Esophagus muscularis mucosa (tissue), 4 donors: ENCODE measurements at regions of chr15 and their contacts with region 1.

Region 1: GRCh38 chr15:91055548-91056331 is 33.3 kb upstream of the VPS33B start:
- DNase-seq: no peak
- H3K4me3 ChIP-seq: no peak overlapping the region
- H3K27ac ChIP-seq: no peak overlapping the region
- H3K4me1 ChIP-seq: peaks cover 0 to 6% (median 3%) of the 10 kb centered on the region in 4 donors
- H3K27me3 ChIP-seq: peaks cover 0 to 60% (median 0%) of the 10 kb centered on the region in 4 donors
- CTCF ChIP-seq: peak; percentile 66 to 84 (median 81)
- EP300 ChIP-seq: no peak
- POLR2A ChIP-seq: no peak

Region 2: GRCh38 chr15:89985111-89985510 is 1070.6 kb before region 1 on chr15:
- intact Hi-C with region 1: no loop called
- DNase-seq: no peak
- H3K4me3 ChIP-seq: no peak overlapping the region
- H3K27ac ChIP-seq: no peak overlapping the region
- H3K4me1 ChIP-seq: no peaks in the 10 kb centered on the region
- H3K27me3 ChIP-seq: peaks cover 0 to 14% (median 0%) of the 10 kb centered on the region in 4 donors
- CTCF ChIP-seq: no peak
- EP300 ChIP-seq: no peak
- POLR2A ChIP-seq: no peak

Region 3: GRCh38 chr15:91224755-91225380 is 169.1 kb after region 1 on chr15:
- intact Hi-C with region 1: loop called (anchors 5 kb)
- DNase-seq: no peak
- H3K4me3 ChIP-seq: no peak overlapping the region
- H3K27ac ChIP-seq: no peak overlapping the region
- H3K4me1 ChIP-seq: peaks cover 0 to 5% (median 1%) of the 10 kb centered on the region in 4 donors
- H3K27me3 ChIP-seq: peaks cover 0 to 22% (median 0%) of the 10 kb centered on the region in 4 donors
- CTCF ChIP-seq: peak; percentile 34 to 61 (median 52)
- EP300 ChIP-seq: no peak
- POLR2A ChIP-seq: no peak

Region 4: DNA sequence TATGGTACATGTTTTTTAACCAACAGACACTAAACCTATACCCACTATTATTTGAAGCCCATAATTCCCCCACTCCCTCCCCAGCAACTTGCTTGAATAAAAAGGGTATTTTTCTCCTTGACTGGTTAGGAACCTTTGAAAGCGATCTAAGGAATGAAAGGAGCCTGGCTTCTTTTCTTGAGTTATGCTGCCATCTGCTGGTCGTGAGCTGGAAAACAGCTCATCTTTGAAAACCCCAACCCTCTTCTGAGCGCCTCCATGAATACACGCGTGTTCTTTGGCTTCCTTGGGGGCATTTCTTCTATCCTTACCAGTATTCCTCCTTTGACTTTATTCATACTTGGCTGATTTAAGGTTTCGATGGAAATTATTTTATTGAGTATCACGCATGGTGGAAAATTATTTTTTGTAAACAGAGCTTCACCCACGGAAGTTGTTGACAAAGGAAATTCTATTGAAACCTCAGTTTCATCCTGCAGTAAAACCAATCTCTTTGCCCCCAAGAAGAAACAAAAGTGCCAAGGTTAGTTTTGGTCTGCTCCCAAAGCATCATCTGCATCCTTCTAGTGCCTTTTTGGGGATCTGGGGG is 215.9 kb after region 1 on chr15:
- intact Hi-C with region 1: loop called (anchors 1 kb)
- DNase-seq: no peak
- H3K4me3 ChIP-seq: no peak overlapping the region
- H3K27ac ChIP-seq: no peak overlapping the region
- H3K4me1 ChIP-seq: peaks cover 0 to 7% (median 0%) of the 10 kb centered on the region in 4 donors
- H3K27me3 ChIP-seq: no peaks in the 10 kb centered on the region
- CTCF ChIP-seq: peak; percentile 81 to 85 (median 84)
- EP300 ChIP-seq: no peak
- POLR2A ChIP-seq: no peak